Common myeloid progenitor, CD34-positive (primary cell): ENCODE measurements at regions of chr4 and their contacts with region 1.

Region 1: GRCh38 chr4:55312489-55313101 is 33.4 kb upstream of the SRD5A3 start:
- DNase-seq: peak; percentile 51 to 75 (median 73)
- H3K4me3 ChIP-seq: no peak overlapping the region
- H3K27ac ChIP-seq: no peak overlapping the region
- H3K4me1 ChIP-seq: no peaks in the 10 kb centered on the region
- H3K27me3 ChIP-seq: peaks cover 0 to 4% (median 0%) of the 10 kb centered on the region in 5 experiments

Region 2: GRCh38 chr4:55184600-55185523 is 127.7 kb before region 1 on chr4:
- CTCF ChIA-PET with region 1: interaction called, 19 read pairs
- POLR2A ChIA-PET with region 1: no interaction called
- DNase-seq: peak; percentile 23 to 40 (median 40)
- H3K4me3 ChIP-seq: no peak overlapping the region
- H3K27ac ChIP-seq: no peak overlapping the region
- H3K4me1 ChIP-seq: no peaks in the 10 kb centered on the region
- H3K27me3 ChIP-seq: peaks cover 0 to 7% (median 4%) of the 10 kb centered on the region in 5 experiments

Region 3: DNA sequence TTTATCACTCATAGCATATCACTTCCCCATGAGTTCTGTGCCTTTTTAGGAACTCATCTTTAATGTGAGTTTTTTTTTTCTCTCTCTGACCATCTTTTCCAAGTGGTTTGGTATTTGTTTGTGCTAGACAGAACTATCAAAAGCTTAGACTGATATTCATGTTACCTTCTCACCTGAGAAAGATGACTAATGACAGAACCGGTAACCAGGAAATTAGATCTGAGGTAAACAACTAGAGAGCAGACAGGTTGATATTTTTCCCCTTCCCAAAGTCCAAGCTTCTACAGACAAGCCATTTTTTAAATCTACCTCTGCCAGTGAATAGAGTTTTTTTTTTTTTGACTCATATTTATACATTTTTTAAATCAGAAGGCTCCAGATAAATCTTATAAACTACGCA is 16.4 kb after region 1 on chr4:
- CTCF ChIA-PET with region 1: interaction called, 40 read pairs
- POLR2A ChIA-PET with region 1: no interaction called
- DNase-seq: no peak
- H3K4me3 ChIP-seq: no peak overlapping the region
- H3K27ac ChIP-seq: no peak overlapping the region
- H3K4me1 ChIP-seq: peaks cover 0 to 3% (median 0%) of the 10 kb centered on the region in 4 experiments
- H3K27me3 ChIP-seq: no peaks in the 10 kb centered on the region

Region 4: DNA sequence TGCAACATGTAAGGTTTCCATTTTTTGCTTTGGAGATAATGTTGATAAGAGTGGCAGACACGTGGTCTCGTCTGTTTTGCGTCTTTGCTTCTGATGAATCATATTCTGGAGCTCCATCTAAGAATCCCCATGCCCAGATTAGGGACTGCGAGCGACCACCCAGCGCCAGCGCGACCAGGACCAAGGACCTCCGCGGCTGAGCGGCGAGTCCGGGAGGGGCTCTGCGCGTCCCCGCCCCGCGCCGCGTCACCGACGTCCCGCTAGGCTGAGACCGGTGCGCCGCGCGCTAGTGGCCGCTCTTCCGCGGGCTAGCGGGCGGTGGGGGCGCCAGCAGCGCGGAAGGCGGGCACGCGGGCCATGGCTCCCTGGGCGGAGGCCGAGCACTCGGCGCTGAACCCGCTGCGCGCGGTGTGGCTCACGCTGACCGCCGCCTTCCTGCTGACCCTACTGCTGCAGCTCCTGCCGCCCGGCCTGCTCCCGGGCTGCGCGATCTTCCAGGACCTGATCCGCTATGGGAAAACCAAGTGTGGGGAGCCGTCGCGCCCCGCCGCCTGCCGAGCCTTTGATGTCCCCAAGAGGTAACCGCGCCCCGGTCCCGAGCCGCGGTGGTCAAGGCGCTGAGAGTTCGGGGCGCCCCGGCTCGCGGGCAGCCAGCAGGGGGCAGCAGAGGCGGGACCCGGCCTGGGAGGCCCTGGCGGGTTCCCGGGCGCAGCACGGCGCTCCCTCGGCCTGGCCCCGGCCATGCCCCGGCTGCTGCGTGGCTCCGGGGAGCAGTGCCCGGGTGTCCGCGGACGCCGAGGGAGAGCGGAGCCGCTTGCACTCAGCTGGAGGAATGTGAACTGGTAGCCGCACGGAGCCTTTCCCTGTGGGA is 33.6 kb after region 1 on chr4 and contains the start of gene SRD5A3:
- CTCF ChIA-PET with region 1: interaction called, 10 read pairs
- POLR2A ChIA-PET with region 1: no interaction called
- DNase-seq: peak; percentile 75 to 83 (median 77)
- H3K4me3 ChIP-seq: peak within 1 kb of the TSS; percentile 70 to 93 (median 77)
- H3K27ac ChIP-seq: peak within 1 kb of the TSS; percentile 58 to 87
- H3K4me1 ChIP-seq: peaks cover 0 to 28% (median 23%) of the 10 kb centered on the region in 4 experiments
- H3K27me3 ChIP-seq: no peaks in the 10 kb centered on the region